Activated naive CD4-positive, alpha-beta T cell treated with anti-CD3 and anti-CD28 coated beads for 36 hours (primary cell): ENCODE measurements at regions of chr11 and their contacts with region 1.

Region 1: DNA sequence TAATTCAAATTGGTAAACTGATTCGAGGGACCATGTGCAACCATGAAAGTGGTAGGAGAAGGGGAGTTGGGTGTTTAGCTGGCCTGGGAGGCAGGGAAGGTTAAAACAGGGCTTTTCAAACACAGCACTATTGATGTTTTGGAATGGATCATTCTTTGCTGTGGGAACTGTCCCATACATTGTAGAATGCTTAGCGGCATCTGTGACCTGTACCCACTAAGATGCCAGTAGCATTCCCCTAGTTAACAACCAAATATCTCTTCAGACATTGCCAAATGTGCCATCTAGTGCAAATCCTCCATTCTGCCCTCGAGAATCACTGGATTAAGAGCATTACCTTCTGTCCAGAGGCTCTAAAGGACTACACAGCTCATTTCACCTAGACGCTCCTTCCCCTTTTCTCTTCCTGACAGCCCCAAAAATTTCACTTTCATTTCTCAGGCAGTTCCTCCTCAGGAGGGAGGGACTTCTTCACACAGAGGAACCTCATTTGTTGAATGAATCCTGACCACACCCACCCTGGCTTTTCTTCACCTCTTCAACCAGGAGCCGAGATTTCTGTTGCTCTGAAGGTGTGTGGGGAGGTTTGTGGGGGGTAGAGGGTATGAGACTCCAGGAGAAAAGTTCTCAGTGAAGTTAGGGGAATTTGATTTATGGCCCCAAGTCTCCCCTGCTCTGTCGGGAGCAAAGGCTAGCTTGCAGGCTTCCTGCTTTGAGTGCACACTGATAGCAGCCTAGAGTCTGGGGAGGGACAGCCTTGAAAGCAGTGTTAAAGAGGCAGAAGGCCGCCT is at the start of gene TRIM34:
- DNase-seq: peak; percentile 73
- H3K4me3 Mint-ChIP-seq: peak within 1 kb of the TSS; percentile 87
- H3K27ac Mint-ChIP-seq: peak within 1 kb of the TSS; percentile 88
- H3K4me1 Mint-ChIP-seq: peaks cover 31% of the 10 kb centered on the region
- H3K27me3 Mint-ChIP-seq: no peaks in the 10 kb centered on the region
- total RNA-seq, gene TRIM34: 12.8 to 12.9 TPM

Region 2: DNA sequence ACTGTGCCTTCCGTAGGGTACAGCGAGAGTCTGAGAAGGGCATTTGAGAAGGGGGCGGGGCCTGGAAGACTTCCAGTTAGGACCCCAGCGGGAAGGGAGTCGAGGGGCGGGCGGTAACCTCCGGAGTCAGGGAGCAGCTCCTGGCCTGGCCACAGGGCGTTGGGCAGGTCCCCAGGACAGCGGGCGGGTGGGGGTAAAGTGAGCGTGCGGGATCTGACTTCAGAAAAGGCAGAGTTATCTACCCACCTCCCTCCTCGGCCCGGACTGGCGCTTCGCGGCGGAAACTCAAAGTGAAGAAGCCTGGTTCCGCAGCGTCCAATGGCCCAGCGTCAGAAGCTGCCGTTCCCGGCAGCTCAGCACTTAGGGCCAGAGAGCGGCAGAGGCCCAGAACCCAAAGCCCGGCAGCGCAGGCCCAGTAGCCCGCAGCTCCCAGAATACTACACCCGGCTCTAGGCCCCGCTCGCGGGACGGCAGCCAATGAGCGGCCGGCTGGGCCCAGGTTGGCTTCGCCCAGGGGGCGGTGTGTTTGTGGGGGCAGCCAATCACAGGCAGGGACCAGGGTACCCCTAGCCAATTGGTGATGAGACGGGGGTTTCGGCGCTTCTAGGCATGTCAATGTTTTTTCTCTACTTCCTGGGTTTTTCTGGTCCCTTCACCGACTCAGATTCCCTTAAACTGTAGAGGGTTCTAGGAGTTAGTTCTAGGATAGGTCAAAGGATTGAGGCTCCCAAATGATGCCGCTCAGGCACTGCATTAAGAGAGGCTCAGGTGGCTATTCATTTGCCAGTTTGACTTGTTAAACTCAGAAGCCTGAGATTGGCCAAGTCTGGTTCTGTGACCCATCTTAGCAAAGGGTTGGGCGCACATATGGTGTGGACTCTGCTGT is 1016.7 kb before region 1 on chr11 and contains the start of gene TRIM68:
- CTCF ChIA-PET with region 1: no interaction called
- intact Hi-C with region 1: loop called (anchors 5 kb)
- DNase-seq: peak; percentile 97
- H3K4me3 Mint-ChIP-seq: peak within 1 kb of the TSS; percentile 94
- H3K27ac Mint-ChIP-seq: peak within 1 kb of the TSS; percentile 88
- H3K4me1 Mint-ChIP-seq: peaks cover 45% of the 10 kb centered on the region
- H3K27me3 Mint-ChIP-seq: no peaks in the 10 kb centered on the region
- total RNA-seq, gene TRIM68: 11.3 to 15.4 TPM

Region 3: DNA sequence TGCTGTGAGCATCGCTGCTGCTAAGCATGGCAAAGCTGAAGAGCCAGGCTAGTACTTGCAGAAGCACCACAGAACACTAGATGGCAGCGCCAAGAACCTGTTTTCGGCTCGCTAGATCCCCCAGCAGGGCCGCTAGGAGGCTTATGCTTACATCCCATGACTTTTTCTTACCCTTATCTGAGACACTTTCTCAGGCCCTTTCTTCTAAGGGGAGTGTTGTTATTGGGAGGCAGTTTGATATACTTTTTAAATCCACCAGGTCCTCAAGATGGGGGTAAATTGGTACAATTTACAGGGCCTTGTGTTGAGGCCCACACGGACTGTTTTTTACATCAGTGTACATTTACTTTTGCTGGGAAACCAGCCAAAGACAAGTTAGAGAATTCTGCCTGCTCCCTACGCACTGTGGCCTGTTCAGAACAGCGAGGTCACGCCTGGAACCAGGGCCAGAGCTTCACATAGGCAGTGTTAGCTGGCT is 24.3 kb before region 1 on chr11:
- CTCF ChIA-PET with region 1: no interaction called
- intact Hi-C with region 1: loop called (anchors 1 kb)
- DNase-seq: peak; percentile 79
- H3K4me3 Mint-ChIP-seq: no peak overlapping the region
- H3K27ac Mint-ChIP-seq: no peak overlapping the region
- H3K4me1 Mint-ChIP-seq: peaks cover 6% of the 10 kb centered on the region
- H3K27me3 Mint-ChIP-seq: no peaks in the 10 kb centered on the region

Region 4: DNA sequence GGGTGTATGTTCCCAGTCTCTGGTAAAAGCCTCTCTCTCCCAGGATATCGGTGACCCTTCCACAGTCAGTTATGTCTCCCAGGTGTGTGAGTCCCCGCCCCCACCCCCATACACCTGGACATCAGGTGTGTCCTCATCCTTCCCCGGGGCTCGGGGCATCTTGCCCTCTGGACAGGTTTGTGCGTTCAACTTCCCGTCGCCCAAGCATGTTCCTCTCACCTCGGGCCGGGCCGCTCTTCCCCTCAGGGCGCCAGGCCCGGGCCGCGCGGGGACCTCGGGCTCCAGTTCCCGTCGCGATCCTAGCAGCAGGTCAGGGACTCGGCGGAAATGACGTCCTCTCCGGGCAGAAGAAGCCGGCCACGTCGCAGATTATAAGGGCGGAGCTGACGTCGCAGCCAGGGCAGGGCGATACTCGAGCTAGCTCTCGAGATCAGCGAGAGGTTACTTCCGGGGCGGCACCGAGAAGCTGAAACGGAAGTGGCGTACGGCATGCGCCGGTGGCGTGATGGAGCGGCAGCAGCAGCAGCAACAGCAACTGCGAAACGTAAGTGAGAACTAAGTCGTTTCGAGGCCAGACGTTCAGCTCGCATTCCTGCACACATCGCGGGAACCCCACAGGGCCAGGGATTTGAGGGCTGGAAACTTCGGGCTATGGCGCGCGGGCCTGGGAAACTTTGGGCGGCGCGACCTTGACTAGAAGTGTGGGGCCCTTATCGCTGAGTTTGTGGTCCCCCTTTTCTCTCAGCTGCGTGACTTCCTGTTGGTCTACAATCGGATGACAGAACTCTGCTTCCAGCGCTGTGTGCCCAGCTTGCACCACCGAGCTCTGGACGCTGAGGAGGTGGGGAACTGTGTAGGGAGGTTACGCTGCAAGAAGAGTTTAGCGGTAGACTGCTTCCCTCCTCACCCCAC is 856.6 kb after region 1 on chr11 and contains the starts of genes ARFIP2 and TIMM10B:
- CTCF ChIA-PET with region 1: no interaction called
- intact Hi-C with region 1: loop called (anchors 5 kb)
- DNase-seq: peak; percentile 99
- H3K4me3 Mint-ChIP-seq: peak within 1 kb of the TSS; percentile 94
- H3K27ac Mint-ChIP-seq: peak within 1 kb of the TSS; percentile 96
- H3K4me1 Mint-ChIP-seq: peaks cover 38% of the 10 kb centered on the region
- H3K27me3 Mint-ChIP-seq: no peaks in the 10 kb centered on the region
- total RNA-seq, gene ARFIP2: 33.5 to 37.9 TPM
- total RNA-seq, gene TIMM10B: 35.1 to 41.7 TPM